ENCODE measurements at regions of chr1 and their contacts with region 1.

Region 1: GRCh38 chr1:226736908-226737818 is 1.9 kb downstream of the ITPKB start:
- DNase-seq: peak; percentile 47
- H3K4me3 Mint-ChIP-seq: peak overlapping the region; percentile 93
- H3K27ac Mint-ChIP-seq: peak overlapping the region; percentile 69
- H3K4me1 Mint-ChIP-seq: peaks cover 53% of the 10 kb centered on the region
- H3K27me3 Mint-ChIP-seq: no peaks in the 10 kb centered on the region

Region 2: DNA sequence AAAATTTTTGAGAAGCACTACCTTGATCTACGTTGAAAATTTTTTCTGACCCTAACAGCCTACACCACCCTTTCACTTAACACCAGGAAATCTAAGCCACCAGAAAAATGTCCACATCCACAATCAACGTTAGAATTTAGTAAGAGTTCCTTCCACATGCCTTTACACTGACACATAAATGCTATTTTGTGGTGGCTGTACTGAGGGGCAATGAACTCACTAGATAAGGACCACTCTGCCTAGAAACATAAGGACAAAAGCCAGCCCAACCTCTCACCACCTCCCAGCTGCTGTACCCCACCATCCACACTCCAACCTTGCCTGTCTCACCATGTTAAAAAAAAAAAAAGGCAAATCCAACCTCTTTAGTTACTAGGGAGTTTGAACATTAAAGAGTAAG is 359.1 kb before region 1 on chr1:
- intact Hi-C with region 1: no loop called
- DNase-seq: no peak
- H3K4me3 Mint-ChIP-seq: no peak overlapping the region
- H3K27ac Mint-ChIP-seq: no peak overlapping the region
- H3K4me1 Mint-ChIP-seq: peaks cover 10% of the 10 kb centered on the region
- H3K27me3 Mint-ChIP-seq: no peaks in the 10 kb centered on the region

Region 3: GRCh38 chr1:226457307-226457712 is 279.9 kb before region 1 on chr1:
- intact Hi-C with region 1: no loop called
- DNase-seq: peak; percentile 19
- H3K4me3 Mint-ChIP-seq: peak overlapping the region; percentile 28
- H3K27ac Mint-ChIP-seq: peak overlapping the region; percentile 6
- H3K4me1 Mint-ChIP-seq: peaks cover 7% of the 10 kb centered on the region
- H3K27me3 Mint-ChIP-seq: peaks cover 10% of the 10 kb centered on the region

Region 4: GRCh38 chr1:226626577-226626956 is 110.6 kb before region 1 on chr1:
- intact Hi-C with region 1: loop called (anchors 2 kb)
- DNase-seq: peak; percentile 76
- H3K4me3 Mint-ChIP-seq: peak overlapping the region; percentile 9
- H3K27ac Mint-ChIP-seq: peak overlapping the region; percentile 78
- H3K4me1 Mint-ChIP-seq: peaks cover 29% of the 10 kb centered on the region
- H3K27me3 Mint-ChIP-seq: peaks cover 10% of the 10 kb centered on the region

Region 5: DNA sequence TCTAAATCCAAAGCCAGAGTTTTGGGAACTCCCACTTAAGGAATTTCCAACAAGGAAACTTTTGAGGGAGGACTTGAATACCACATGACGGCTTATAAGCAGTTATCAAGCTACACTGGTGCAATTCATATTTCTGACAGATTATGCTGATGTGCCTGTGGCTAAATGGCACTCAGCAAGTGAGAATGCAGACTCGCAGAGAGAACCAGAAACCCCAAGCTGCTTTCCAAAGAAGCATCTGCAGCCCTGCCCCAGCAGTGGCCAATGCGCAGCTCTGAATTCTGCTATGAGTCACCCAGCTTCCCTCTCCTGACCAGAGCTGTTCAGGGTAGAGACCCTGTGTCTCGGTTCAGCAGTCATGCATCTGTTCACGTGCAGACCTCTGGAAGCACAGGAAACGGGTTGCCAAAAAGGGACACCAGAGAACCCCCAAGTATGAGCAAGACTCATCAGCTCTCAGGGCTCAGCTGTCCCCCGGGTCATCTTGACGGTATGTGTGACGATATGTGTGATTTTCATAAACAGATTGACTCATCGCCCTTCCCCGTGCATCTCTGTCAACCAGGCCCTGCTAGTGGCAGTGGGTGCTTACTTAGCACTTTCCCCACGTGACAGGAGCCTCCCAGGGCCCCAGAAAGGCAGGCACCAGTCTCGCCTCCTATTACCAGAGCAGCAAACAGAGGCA is 74.4 kb before region 1 on chr1:
- intact Hi-C with region 1: loop called (anchors 1 kb)
- DNase-seq: peak; percentile 80
- H3K4me3 Mint-ChIP-seq: peak overlapping the region; percentile 5
- H3K27ac Mint-ChIP-seq: peak overlapping the region; percentile 81
- H3K4me1 Mint-ChIP-seq: peaks cover 74% of the 10 kb centered on the region
- H3K27me3 Mint-ChIP-seq: no peaks in the 10 kb centered on the region

Region 6: DNA sequence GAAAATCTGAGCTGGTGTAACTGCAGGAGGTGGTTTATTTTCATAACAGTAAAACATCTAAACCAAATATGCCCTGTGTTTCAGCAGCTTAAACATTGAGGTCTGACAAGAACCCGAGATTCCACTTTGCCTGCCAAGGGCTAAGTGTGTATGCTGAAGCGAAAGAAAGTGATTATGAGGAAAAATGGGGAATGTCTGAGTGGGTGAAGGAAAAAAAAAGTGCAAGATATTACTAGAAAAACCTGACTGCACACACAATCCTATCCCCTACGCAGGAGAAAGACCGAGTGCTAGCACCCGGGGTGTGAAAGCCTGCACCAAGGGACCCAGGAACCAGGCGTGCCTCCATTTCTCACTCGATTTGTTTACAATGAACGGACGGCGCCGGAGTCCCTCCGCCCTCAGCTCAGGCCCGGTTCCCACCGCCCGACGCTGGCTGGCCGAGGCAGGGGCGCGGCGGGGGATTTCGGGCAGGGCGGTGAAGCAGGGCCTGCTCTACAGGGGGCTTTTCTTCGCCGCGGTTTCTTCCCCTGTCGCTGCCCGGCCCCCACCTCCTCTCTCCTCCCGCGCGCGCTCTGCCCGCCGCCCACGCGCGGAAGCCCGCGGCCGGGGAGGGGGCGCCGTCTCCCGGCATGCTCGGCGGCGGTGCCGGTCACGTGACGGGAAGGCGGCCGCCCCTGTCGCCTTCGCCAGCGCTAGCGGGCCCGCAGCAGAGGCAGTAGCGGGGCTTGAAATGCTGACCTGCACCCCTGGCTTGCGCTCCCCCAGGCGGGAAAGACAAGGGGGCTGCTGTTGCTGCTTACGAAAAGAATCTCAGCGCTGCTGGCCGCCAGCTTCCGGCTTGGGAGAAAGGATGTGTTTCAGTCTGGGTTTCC is 34.0 kb before region 1 on chr1:
- intact Hi-C with region 1: loop called (anchors 5 kb)
- DNase-seq: peak; percentile 76
- H3K4me3 Mint-ChIP-seq: peak overlapping the region; percentile 75
- H3K27ac Mint-ChIP-seq: peak overlapping the region; percentile 84
- H3K4me1 Mint-ChIP-seq: peaks cover 59% of the 10 kb centered on the region
- H3K27me3 Mint-ChIP-seq: no peaks in the 10 kb centered on the region

Region 7: GRCh38 chr1:226723657-226724532 is 13.3 kb before region 1 on chr1:
- intact Hi-C with region 1: loop called (anchors 1 kb)
- DNase-seq: no peak
- H3K4me3 Mint-ChIP-seq: peak overlapping the region; percentile 64
- H3K27ac Mint-ChIP-seq: peak overlapping the region; percentile 78
- H3K4me1 Mint-ChIP-seq: peaks cover 70% of the 10 kb centered on the region
- H3K27me3 Mint-ChIP-seq: no peaks in the 10 kb centered on the region

Region 8: GRCh38 chr1:226827968-226828513 is 90.9 kb after region 1 on chr1:
- intact Hi-C with region 1: loop called (anchors 1 kb)
- DNase-seq: peak; percentile 90
- H3K4me3 Mint-ChIP-seq: peak overlapping the region; percentile 39
- H3K27ac Mint-ChIP-seq: peak overlapping the region; percentile 90
- H3K4me1 Mint-ChIP-seq: peaks cover 21% of the 10 kb centered on the region
- H3K27me3 Mint-ChIP-seq: peaks cover 3% of the 10 kb centered on the region

Measured in activated T-helper 2 cell treated with anti-CD3 and anti-CD28 coated beads, Interferon-gamma antibody, Interleukin-2, Interleukin-4, amounts not matched to agents 10 μg/mL and 5 μg/mL and 100 μg/mL, durations not matched to agents 14 hours and 24 hours and 36 hours (primary cell).